Prostate gland (tissue), 2 donors: ENCODE measurements at regions of chr2 and their contacts with region 1.

Region 1: DNA sequence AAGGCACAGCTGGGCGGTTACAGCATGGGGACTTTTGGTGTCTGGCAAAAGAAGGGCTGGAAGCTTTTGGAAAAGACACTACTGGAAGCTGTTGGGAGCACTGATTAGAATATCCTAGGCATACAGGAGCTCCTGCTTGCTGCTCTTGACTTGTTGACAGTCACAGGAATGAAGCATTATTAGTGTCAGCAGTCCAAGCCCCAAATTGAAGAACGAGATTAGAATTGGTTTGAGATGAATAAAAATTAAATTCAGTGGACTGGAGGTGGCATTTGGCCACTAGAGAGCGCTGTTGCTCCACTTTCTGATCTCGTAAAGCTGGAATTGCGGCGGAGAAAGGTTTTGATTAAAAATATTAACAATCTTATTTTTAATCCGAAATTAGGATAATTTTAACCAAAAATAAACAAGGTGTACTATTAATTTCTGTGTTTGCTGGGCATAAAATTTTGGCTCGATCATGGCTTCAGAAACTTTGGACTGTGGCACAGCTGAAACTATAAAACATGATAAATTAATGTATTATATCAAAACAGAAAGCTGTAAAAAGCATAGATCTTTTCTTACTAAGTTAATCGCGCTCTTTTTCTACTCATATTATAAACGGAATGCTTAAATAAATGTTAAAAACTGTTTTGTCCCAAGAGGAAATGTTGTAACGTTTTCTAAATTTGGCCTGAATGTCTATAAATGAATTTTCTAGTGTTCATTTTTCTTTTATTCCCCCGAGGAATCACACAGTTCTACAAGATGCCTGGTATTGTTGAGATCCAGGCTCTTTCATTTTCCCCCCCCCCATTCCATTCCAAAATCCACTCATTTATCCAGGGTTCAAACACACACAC is 2.4 kb upstream of the HOXD8 start:
- DNase-seq: peak; percentile 55
- H3K4me3 ChIP-seq: no peak overlapping the region
- H3K27ac ChIP-seq: no peak overlapping the region
- H3K4me1 ChIP-seq: no peaks in the 10 kb centered on the region
- H3K27me3 ChIP-seq: no peaks in the 10 kb centered on the region
- CTCF ChIP-seq: peak; percentile 83 to 97 (median 91)
- POLR2A ChIP-seq: no peak

Region 2: DNA sequence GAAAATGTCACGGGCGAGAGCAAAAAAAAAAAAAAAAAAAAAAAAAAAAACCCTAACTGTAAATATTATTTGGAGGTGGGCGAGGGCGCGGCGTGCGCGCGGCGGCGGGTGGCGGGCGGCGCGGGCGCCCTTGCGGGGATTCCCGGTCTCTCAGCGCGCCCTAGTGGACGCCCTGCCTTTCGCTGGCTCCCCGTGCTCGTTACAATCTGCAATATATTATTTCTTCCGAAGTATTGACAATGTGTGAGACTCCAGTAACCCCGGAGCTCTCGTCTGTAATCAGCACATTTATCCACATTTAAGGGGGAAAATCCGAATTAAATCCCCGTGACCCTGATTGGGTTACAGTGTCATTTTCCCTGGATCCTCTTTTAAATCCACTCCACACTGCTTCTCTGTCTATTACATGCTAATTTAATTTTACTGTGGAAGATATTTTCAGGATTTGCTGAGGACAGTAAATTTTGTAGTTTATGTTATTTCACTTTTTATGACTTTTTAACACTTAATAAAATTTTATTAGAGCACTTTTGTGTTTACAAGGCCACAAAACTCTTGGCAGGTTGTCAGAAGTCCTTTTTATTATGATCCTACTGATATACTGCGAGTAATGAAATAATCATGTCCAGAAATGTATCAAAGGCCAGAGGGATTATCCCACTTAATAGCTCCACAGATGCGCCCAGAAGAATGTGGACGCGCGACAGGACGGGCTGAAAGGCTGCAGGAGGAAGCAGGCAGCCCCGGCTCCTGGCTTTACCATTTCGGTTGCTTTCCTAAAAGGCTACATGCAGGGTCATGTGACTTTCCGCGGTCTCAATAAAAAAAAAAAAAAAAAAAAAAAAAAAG is 511.2 kb after region 1 on chr2:
- intact Hi-C with region 1: loop called (anchors 5 kb)
- DNase-seq: peak; percentile 61
- H3K4me3 ChIP-seq: peak overlapping the region; percentile 25 to 41
- H3K27ac ChIP-seq: no peak overlapping the region
- H3K4me1 ChIP-seq: peaks cover 6% of the 10 kb centered on the region
- H3K27me3 ChIP-seq: peaks cover 21% of the 10 kb centered on the region
- CTCF ChIP-seq: peak; percentile 41 to 85 (median 65)
- POLR2A ChIP-seq: no peak

Region 3: GRCh38 chr2:176814306-176815052 is 687.3 kb after region 1 on chr2:
- intact Hi-C with region 1: loop called (anchors 10 kb)
- DNase-seq: no peak
- H3K4me3 ChIP-seq: no peak overlapping the region
- H3K27ac ChIP-seq: no peak overlapping the region
- H3K4me1 ChIP-seq: peaks cover 3% of the 10 kb centered on the region
- H3K27me3 ChIP-seq: no peaks in the 10 kb centered on the region
- CTCF ChIP-seq: peak; percentile 21 to 73 (median 56)
- POLR2A ChIP-seq: no peak